ENCODE measurements at regions of chr2 and their contacts with region 1.

Region 1: GRCh38 chr2:177582000-177582399 is 189.4 kb downstream of the AGPS start:
- DNase-seq: no peak
- ATAC-seq: no peak
- H3K4me3 ChIP-seq: no peak overlapping the region
- H3K27ac ChIP-seq: no peak overlapping the region
- H3K4me1 ChIP-seq: peaks cover 0 to 13% (median 0%) of the 10 kb centered on the region in 9 donors
- H3K27me3 ChIP-seq: no peaks in the 10 kb centered on the region
- CTCF ChIP-seq: no peak

Region 2: DNA sequence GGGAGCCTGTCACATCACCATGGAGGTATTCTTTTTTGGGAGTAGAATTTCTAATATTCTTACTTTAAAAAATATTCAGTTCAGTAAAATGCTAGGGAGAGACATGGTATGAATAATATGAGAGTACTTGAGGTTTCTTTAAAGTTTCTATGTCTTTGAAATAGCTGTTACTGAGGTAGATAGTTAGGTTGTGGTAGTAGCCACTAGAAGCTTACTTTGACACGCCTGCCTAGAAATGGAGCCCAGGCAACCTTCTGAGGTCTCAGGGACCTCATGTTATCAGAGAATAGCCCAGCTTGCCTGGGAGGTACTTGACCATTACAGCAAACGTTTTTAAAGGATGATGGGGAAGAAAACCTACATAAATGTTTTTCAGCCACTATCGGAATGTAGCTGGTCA is 58.2 kb before region 1 on chr2:
- intact Hi-C with region 1: loop called in 1 of 10 experiments (anchors 2 kb)
- DNase-seq: no peak
- ATAC-seq: no peak
- H3K4me3 ChIP-seq: no peak overlapping the region
- H3K27ac ChIP-seq: no peak overlapping the region
- H3K4me1 ChIP-seq: no peaks in the 10 kb centered on the region
- H3K27me3 ChIP-seq: no peaks in the 10 kb centered on the region
- CTCF ChIP-seq: no peak

Measured in heart right ventricle (tissue), 16 donors.